Gastrocnemius medialis (tissue), 4 donors: ENCODE measurements at regions of chr5 and their contacts with region 1.

Region 1: DNA sequence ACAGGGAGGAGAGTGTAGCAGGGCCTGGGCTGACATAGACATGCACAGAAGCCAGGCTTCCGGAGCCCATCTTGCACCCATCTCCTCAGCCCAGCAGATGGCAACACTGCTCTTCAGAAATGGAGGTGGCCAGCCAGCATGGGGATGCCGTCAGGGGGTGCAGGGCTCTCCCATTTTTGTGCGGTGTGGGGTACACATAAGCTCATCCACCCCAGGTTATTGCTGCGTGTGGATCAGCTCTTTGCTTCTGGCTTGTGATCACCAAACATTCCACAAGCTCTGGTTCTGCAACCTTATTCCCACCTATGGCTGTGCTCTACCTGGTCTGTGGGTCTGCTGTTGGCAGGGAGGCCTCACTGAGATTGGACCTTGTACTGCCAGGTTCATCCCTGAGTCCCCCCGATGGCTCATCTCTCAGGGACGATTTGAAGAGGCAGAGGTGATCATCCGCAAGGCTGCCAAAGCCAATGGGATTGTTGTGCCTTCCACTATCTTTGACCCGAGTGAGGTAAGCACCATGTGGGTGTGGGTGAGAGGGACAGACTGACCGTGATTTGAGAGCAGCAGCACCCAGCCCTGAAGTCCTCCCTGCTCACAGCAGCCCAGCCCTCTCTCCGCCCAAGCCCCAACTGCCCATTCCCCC is 17.3 kb downstream of the SLC22A5 start:
- DNase-seq: peak in 1 of 2 donors; percentile 58
- ATAC-seq: peak; percentile 52 to 74
- H3K4me3 ChIP-seq: no peak overlapping the region
- H3K27ac ChIP-seq: peak overlapping the region; percentile 73 to 82 (median 78)
- H3K4me1 ChIP-seq: peaks cover 29 to 32% of the 10 kb centered on the region in 2 donors
- H3K27me3 ChIP-seq: no peaks in the 10 kb centered on the region
- CTCF ChIP-seq: peak; percentile 64 to 81 (median 71)
- POLR2A ChIP-seq: no peak

Region 2: GRCh38 chr5:132410451-132411381 is 24.0 kb after region 1 on chr5:
- in situ Hi-C with region 1: no loop called
- intact Hi-C with region 1: loop called (anchors 1 kb)
- DNase-seq: peak; percentile 69 to 90
- ATAC-seq: peak; percentile 70 to 75
- H3K4me3 ChIP-seq: peak overlapping the region; percentile 65 to 80 (median 68)
- H3K27ac ChIP-seq: peak overlapping the region; percentile 87 to 99 (median 94)
- H3K4me1 ChIP-seq: peaks cover 48 to 61% of the 10 kb centered on the region in 2 donors
- H3K27me3 ChIP-seq: no peaks in the 10 kb centered on the region
- CTCF ChIP-seq: peak; percentile 42 to 71 (median 60)
- POLR2A ChIP-seq: peak; percentile 72 to 74

Region 3: GRCh38 chr5:132495667-132496190 is 109.0 kb after region 1 on chr5:
- in situ Hi-C with region 1: loop called (anchors 5 to 10 kb)
- intact Hi-C with region 1: loop called (anchors 1 kb)
- DNase-seq: peak; percentile 57 to 69
- ATAC-seq: peak; percentile 28 to 36
- H3K4me3 ChIP-seq: peak overlapping the region; percentile 60 to 74 (median 66)
- H3K27ac ChIP-seq: peak overlapping the region; percentile 77 to 84 (median 81)
- H3K4me1 ChIP-seq: peaks cover 31 to 37% of the 10 kb centered on the region in 2 donors
- H3K27me3 ChIP-seq: no peaks in the 10 kb centered on the region
- CTCF ChIP-seq: no peak
- POLR2A ChIP-seq: no peak

Region 4: DNA sequence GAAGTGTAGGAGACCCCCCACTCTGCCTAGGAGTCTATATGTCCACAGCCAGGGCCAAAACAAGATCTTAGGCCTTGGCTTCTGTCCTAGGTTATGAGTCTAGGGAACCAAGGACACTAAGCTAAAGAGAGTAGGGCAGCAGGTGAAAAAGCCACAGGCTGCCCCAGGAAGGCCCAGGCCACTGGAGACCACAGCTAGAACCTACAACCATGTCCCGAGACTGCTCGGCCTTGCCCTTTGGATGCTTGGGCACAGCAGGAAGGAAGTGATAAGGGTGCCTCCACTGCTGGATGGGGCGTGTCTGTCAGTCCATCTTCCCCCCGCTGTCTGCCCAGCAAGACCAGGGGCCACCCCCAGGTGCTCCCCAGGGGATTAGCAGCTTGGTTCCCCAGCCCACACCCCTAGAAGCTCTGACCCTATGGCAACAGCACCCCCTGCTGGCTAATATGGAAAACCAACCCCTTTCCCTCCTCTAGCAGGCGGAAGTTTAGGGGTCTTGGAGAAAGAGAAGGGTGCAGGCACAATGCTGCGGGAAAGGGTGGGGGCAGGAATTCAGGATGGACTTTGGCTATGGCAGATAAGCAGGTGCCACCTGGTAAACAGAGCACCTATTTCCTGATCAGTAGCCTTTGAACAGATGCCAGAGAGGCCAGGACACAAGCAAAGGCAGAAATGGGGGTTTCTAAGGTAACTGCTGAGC is 114.3 kb after region 1 on chr5:
- in situ Hi-C with region 1: loop called (anchors 5 to 10 kb)
- intact Hi-C with region 1: loop called (anchors 1 kb)
- DNase-seq: peak; percentile 35 to 50
- ATAC-seq: peak; percentile 25 to 44
- H3K4me3 ChIP-seq: no peak overlapping the region
- H3K27ac ChIP-seq: peak overlapping the region; percentile 36 to 54 (median 42)
- H3K4me1 ChIP-seq: peaks cover 17 to 21% of the 10 kb centered on the region in 2 donors
- H3K27me3 ChIP-seq: no peaks in the 10 kb centered on the region
- CTCF ChIP-seq: peak; percentile 89 to 96 (median 90)
- POLR2A ChIP-seq: no peak

Region 5: DNA sequence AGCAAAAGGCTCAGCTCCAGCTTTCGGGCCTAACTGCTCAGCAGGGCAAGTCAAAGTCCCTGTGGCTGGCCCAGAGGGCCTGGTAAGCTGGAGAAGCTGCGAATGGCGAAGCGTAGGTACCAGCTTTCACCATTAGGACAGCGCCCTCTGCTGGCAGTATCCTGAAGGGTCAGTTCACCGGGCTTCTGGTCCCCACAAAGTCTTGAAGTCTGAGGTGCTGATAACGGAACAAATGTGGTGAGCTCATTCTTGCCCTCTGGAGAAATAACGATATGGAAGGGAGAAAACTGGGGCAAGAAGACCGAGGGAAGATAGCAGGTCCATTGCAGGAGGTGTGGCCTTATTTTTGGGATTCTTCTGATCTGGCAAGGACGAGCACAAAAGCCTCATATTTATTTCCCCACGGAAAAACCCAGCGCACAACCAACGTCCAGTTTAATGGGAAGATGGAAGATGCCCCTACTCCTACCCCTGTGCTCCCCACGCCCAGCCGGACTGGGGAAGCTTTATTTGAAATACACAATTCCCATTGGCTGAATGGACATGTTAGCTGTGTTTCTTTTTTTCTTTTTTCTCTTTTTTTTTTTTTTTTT is 433.5 kb after region 1 on chr5:
- in situ Hi-C with region 1: no loop called
- intact Hi-C with region 1: loop called (anchors 2 kb)
- DNase-seq: peak; percentile 65 to 78
- ATAC-seq: peak; percentile 76 to 92
- H3K4me3 ChIP-seq: no peak overlapping the region
- H3K27ac ChIP-seq: no peak overlapping the region
- H3K4me1 ChIP-seq: peaks cover 0 to 3% of the 10 kb centered on the region in 2 donors
- H3K27me3 ChIP-seq: no peaks in the 10 kb centered on the region
- CTCF ChIP-seq: peak; percentile 66 to 89 (median 82)
- POLR2A ChIP-seq: no peak

Region 6: DNA sequence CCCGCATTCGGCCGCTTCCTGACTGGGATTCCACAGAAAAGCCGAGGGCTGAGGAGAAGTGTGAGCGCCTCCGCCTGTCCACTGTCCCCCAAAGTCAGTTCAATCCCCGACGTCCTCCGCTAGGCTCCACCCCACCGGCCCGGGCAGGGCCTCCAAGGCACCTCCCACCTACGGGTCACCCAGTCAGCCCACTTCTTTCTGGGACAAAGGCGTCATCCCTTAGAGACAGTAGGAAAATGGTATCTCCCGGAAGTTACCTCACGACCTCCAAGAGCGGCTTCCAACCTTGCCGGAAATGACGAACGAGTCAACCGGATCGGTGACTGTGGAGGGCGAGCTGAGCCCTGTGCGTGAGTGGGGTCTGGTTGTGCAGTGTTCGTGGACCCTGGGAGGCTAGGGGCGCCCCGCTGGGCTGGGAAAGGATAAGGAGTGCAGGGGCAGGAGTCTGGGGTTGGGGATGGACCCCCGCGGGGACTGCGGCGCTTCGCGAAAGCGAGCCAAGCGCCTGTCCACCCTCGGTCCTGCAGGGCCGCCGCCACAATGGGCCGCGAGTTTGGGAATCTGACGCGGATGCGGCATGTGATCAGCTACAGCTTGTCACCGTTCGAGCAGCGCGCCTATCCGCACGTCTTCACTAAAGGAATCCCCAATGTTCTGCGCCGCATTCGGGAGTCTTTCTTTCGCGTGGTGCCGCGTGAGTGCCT is 479.7 kb after region 1 on chr5 and contains the starts of genes GDF9 and UQCRQ:
- in situ Hi-C with region 1: loop called in 2 of 4 experiments (anchors 25 kb)
- intact Hi-C with region 1: no loop called
- DNase-seq: peak; percentile 95 to 96
- ATAC-seq: peak; percentile 99
- H3K4me3 ChIP-seq: peak within 1 kb of the TSS; percentile 63 to 92 (median 85)
- H3K27ac ChIP-seq: peak within 1 kb of the TSS; percentile 83 to 93 (median 88)
- H3K4me1 ChIP-seq: peaks cover 27 to 31% of the 10 kb centered on the region in 2 donors
- H3K27me3 ChIP-seq: no peaks in the 10 kb centered on the region
- CTCF ChIP-seq: no peak
- POLR2A ChIP-seq: peak; percentile 91 to 93
- total RNA-seq, gene GDF9: 0.13 to 2.5 (median 0.46) TPM in 3 of 4 donors, not detected in the other
- total RNA-seq, gene UQCRQ: 273 to 566 (median 326) TPM